Endothelial cell of umbilical vein (primary cell): ENCODE measurements at regions of chr10 and their contacts with region 1.

Region 1: GRCh38 chr10:96043033-96043932 is at the start of gene CCNJ:
- DNase-seq: peak; percentile 91
- H3K4me3 ChIP-seq: peak within 1 kb of the TSS; percentile 78 to 99 (median 98)
- H3K27ac ChIP-seq: peak within 1 kb of the TSS; percentile 76
- H3K4me1 ChIP-seq: peaks cover 28% of the 10 kb centered on the region
- H3K27me3 ChIP-seq: no peaks in the 10 kb centered on the region
- CTCF ChIP-seq: peak in 1 of 2 donors; percentile 10
- POLR2A ChIP-seq: peak; percentile 95
- total RNA-seq, gene CCNJ: 22.4 and 25.5 TPM in 2 replicates

Region 2: GRCh38 chr10:95907456-95908253 is 135.6 kb before region 1 on chr10 and contains the start of gene CC2D2B:
- CTCF ChIA-PET with region 1: no interaction called
- POLR2A ChIA-PET with region 1: no interaction called
- dilution Hi-C with region 1: no loop called
- intact Hi-C with region 1: loop called (anchors 5 kb)
- DNase-seq: peak; percentile 89
- H3K4me3 ChIP-seq: peak within 1 kb of the TSS; percentile 15 to 80 (median 68)
- H3K27ac ChIP-seq: peak within 1 kb of the TSS; percentile 16
- H3K4me1 ChIP-seq: peaks cover 4% of the 10 kb centered on the region
- H3K27me3 ChIP-seq: peaks cover 0 to 1% of the 10 kb centered on the region in 2 experiments
- CTCF ChIP-seq: peak; percentile 22
- POLR2A ChIP-seq: peak; percentile 77
- total RNA-seq, gene CC2D2B: 0.53 and 1.2 TPM in 2 replicates

Region 3: DNA sequence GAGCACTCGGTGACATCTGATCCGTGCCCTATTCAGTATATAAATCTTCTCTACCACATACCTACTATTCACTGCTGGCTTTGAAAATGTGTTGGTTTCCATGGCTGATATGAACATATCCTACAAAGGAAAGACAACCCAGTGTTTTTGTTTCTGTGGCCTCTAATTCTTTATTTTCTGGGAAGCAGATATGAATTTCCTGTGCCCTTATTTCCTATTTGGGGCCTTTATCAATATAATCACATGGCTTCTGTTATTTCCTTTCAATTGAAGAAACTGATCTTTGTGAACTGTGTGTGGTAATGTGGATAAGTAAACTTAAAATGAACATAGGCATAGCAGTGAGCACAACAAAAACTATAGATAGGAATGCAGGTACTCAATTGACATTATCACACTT is 10.7 kb after region 1 on chr10:
- CTCF ChIA-PET with region 1: interaction called, 3 read pairs
- POLR2A ChIA-PET with region 1: no interaction called
- dilution Hi-C with region 1: no loop called
- intact Hi-C with region 1: loop called (anchors 1 kb)
- DNase-seq: peak; percentile 92
- H3K4me3 ChIP-seq: peak overlapping the region in 1 of 3 experiments; percentile 15
- H3K27ac ChIP-seq: peak overlapping the region; percentile 74
- H3K4me1 ChIP-seq: peaks cover 44% of the 10 kb centered on the region
- H3K27me3 ChIP-seq: no peaks in the 10 kb centered on the region
- CTCF ChIP-seq: no peak
- POLR2A ChIP-seq: no peak

Region 4: DNA sequence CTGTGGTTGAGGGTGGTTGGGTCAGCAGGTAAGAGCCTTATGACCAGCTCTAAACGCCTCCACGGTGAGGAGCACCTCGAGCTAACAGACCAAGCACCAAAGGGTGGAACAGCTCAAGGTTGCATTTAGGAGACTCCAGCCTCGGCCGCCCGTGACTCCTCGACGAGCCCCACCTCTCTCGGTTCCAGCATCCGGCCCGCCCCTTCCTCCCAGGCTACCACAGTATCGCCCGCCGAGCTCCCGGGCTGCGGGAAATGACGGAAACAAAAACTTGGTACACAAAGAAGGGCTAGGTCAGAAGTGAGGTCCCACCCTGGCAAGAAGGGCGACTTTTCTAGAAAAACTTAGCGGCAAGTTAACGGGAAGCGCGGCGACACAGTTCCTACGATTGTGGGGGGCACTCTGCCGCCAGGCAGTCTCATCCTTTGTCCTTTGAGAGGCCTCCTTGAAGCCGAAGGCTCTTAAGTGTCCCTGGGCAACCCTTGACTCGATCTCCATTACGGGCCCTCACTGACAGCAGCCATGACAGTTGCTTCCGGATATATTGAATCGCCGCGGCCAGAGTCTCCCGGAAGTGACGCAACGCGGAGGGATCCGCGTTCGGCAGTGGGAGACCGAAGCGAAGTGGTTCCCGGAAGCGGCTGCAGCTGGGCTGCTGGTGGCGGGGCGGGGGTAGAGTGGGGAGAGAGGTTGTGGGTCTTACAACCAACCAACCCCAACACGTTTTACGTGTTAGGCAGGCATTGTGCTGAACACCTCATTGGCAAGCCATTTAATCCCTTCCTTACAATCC is 46.6 kb after region 1 on chr10:
- CTCF ChIA-PET with region 1: interaction called, 4 read pairs
- POLR2A ChIA-PET with region 1: interaction called, 3 read pairs
- dilution Hi-C with region 1: no loop called
- intact Hi-C with region 1: loop called (anchors 1 kb)
- DNase-seq: peak; percentile 86
- H3K4me3 ChIP-seq: peak overlapping the region; percentile 40 to 67 (median 67)
- H3K27ac ChIP-seq: peak overlapping the region; percentile 84
- H3K4me1 ChIP-seq: peaks cover 4% of the 10 kb centered on the region
- H3K27me3 ChIP-seq: peaks cover 19 to 23% of the 10 kb centered on the region in 2 experiments
- CTCF ChIP-seq: no peak
- POLR2A ChIP-seq: peak; percentile 66

Region 5: DNA sequence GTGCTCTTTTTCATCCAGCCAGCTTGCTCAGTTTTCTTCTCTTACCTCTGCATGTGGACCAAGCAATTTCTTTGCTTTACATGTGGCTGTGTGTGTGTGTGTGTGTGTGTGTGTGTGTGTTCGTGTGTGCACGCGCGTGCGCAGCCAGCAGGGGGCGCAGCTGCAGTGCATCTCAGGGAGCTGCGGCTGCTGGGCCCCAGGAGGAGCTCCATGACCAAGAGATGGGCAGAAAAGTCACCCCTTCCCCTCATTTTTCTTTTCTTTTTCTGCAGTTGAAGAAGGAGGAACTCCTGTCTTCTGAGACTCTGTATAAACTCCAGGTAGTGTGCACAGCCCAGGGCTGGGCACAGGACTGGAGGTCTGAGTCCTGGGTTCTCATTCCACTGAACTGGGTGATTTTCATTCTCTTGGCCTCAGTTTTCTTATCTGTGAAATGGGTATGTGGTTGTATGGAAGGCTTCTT is 186.3 kb after region 1 on chr10:
- CTCF ChIA-PET with region 1: interaction called, 10 read pairs
- POLR2A ChIA-PET with region 1: no interaction called
- dilution Hi-C with region 1: no loop called
- intact Hi-C with region 1: no loop called
- DNase-seq: peak; percentile 49
- H3K4me3 ChIP-seq: no peak overlapping the region
- H3K27ac ChIP-seq: no peak overlapping the region
- H3K4me1 ChIP-seq: no peaks in the 10 kb centered on the region
- H3K27me3 ChIP-seq: no peaks in the 10 kb centered on the region
- CTCF ChIP-seq: peak; percentile 92
- POLR2A ChIP-seq: no peak